CD4-positive, alpha-beta memory T cell (primary cell): ENCODE measurements at regions of chr10 and their contacts with region 1.

Region 1: GRCh38 chr10:5813287-5814109 is at the start of gene GDI2:
- DNase-seq: peak; percentile 96 to 98 (median 97)
- H3K4me3 ChIP-seq: peak within 1 kb of the TSS; percentile 78 to 95
- H3K4me3 Mint-ChIP-seq: peak within 1 kb of the TSS; percentile 87 to 99 (median 95)
- H3K27ac ChIP-seq: peak within 1 kb of the TSS; percentile 98
- H3K27ac Mint-ChIP-seq: peak within 1 kb of the TSS; percentile 88 to 98 (median 97)
- H3K4me1 ChIP-seq: peaks cover 51% of the 10 kb centered on the region
- H3K4me1 Mint-ChIP-seq: peaks cover 40 to 65% (median 53%) of the 10 kb centered on the region in 4 donors
- H3K27me3 ChIP-seq: no peaks in the 10 kb centered on the region
- H3K27me3 Mint-ChIP-seq: no peaks in the 10 kb centered on the region
- total RNA-seq, gene GDI2: 137 to 140 TPM

Region 2: GRCh38 chr10:5446390-5446926 is 367.0 kb before region 1 on chr10:
- CTCF ChIA-PET with region 1: no interaction called
- POLR2A ChIA-PET with region 1: no interaction called
- intact Hi-C with region 1: loop called (anchors 5 kb)
- DNase-seq: peak; percentile 46 to 72 (median 56)
- H3K4me3 ChIP-seq: peak overlapping the region in 1 of 2 donors; percentile 10
- H3K4me3 Mint-ChIP-seq: peak overlapping the region; percentile 81 to 90 (median 86)
- H3K27ac ChIP-seq: no peak overlapping the region
- H3K27ac Mint-ChIP-seq: peak overlapping the region; percentile 45 to 93 (median 85)
- H3K4me1 ChIP-seq: peaks cover 23% of the 10 kb centered on the region
- H3K4me1 Mint-ChIP-seq: peaks cover 13 to 40% (median 27%) of the 10 kb centered on the region in 4 donors
- H3K27me3 ChIP-seq: no peaks in the 10 kb centered on the region
- H3K27me3 Mint-ChIP-seq: no peaks in the 10 kb centered on the region

Region 3: GRCh38 chr10:5623081-5623748 is 190.3 kb before region 1 on chr10:
- CTCF ChIA-PET with region 1: no interaction called
- POLR2A ChIA-PET with region 1: no interaction called
- intact Hi-C with region 1: no loop called
- DNase-seq: peak; percentile 68 to 75 (median 70)
- H3K4me3 ChIP-seq: no peak overlapping the region
- H3K4me3 Mint-ChIP-seq: no peak overlapping the region
- H3K27ac ChIP-seq: no peak overlapping the region
- H3K27ac Mint-ChIP-seq: no peak overlapping the region
- H3K4me1 ChIP-seq: no peaks in the 10 kb centered on the region
- H3K4me1 Mint-ChIP-seq: peaks cover 0 to 7% (median 3%) of the 10 kb centered on the region in 4 donors
- H3K27me3 ChIP-seq: no peaks in the 10 kb centered on the region
- H3K27me3 Mint-ChIP-seq: no peaks in the 10 kb centered on the region

Region 4: GRCh38 chr10:5776136-5776880 is 37.2 kb before region 1 on chr10:
- CTCF ChIA-PET with region 1: no interaction called
- POLR2A ChIA-PET with region 1: interaction called, 24 read pairs
- intact Hi-C with region 1: loop called (anchors 2 kb)
- DNase-seq: no peak
- H3K4me3 ChIP-seq: peak overlapping the region in 1 of 2 donors; percentile 23
- H3K4me3 Mint-ChIP-seq: peak overlapping the region; percentile 56 to 81 (median 76)
- H3K27ac ChIP-seq: peak overlapping the region; percentile 58
- H3K27ac Mint-ChIP-seq: peak overlapping the region; percentile 88 to 97 (median 94)
- H3K4me1 ChIP-seq: peaks cover 26% of the 10 kb centered on the region
- H3K4me1 Mint-ChIP-seq: peaks cover 35 to 65% (median 46%) of the 10 kb centered on the region in 4 donors
- H3K27me3 ChIP-seq: no peaks in the 10 kb centered on the region
- H3K27me3 Mint-ChIP-seq: no peaks in the 10 kb centered on the region

Region 5: GRCh38 chr10:5840314-5841307 is 27.1 kb after region 1 on chr10:
- CTCF ChIA-PET with region 1: no interaction called
- POLR2A ChIA-PET with region 1: no interaction called
- intact Hi-C with region 1: no loop called
- DNase-seq: no peak
- H3K4me3 ChIP-seq: no peak overlapping the region
- H3K4me3 Mint-ChIP-seq: no peak overlapping the region
- H3K27ac ChIP-seq: no peak overlapping the region
- H3K27ac Mint-ChIP-seq: no peak overlapping the region
- H3K4me1 ChIP-seq: no peaks in the 10 kb centered on the region
- H3K4me1 Mint-ChIP-seq: peaks cover 2 to 16% (median 4%) of the 10 kb centered on the region in 4 donors
- H3K27me3 ChIP-seq: no peaks in the 10 kb centered on the region
- H3K27me3 Mint-ChIP-seq: peaks cover 2 to 3% of the 10 kb centered on the region in 2 donors

Region 6: GRCh38 chr10:5873515-5873995 is 60.1 kb after region 1 on chr10:
- CTCF ChIA-PET with region 1: interaction called, 4 read pairs
- POLR2A ChIA-PET with region 1: no interaction called
- intact Hi-C with region 1: loop called (anchors 1 kb)
- DNase-seq: peak; percentile 57 to 75 (median 63)
- H3K4me3 ChIP-seq: no peak overlapping the region
- H3K4me3 Mint-ChIP-seq: peak overlapping the region in 2 of 8 donors; percentile 26 to 60
- H3K27ac ChIP-seq: no peak overlapping the region
- H3K27ac Mint-ChIP-seq: peak overlapping the region in 3 of 7 donors; percentile 18 to 63 (median 33)
- H3K4me1 ChIP-seq: no peaks in the 10 kb centered on the region
- H3K4me1 Mint-ChIP-seq: peaks cover 3 to 6% (median 4%) of the 10 kb centered on the region in 4 donors
- H3K27me3 ChIP-seq: no peaks in the 10 kb centered on the region
- H3K27me3 Mint-ChIP-seq: no peaks in the 10 kb centered on the region

Region 7: DNA sequence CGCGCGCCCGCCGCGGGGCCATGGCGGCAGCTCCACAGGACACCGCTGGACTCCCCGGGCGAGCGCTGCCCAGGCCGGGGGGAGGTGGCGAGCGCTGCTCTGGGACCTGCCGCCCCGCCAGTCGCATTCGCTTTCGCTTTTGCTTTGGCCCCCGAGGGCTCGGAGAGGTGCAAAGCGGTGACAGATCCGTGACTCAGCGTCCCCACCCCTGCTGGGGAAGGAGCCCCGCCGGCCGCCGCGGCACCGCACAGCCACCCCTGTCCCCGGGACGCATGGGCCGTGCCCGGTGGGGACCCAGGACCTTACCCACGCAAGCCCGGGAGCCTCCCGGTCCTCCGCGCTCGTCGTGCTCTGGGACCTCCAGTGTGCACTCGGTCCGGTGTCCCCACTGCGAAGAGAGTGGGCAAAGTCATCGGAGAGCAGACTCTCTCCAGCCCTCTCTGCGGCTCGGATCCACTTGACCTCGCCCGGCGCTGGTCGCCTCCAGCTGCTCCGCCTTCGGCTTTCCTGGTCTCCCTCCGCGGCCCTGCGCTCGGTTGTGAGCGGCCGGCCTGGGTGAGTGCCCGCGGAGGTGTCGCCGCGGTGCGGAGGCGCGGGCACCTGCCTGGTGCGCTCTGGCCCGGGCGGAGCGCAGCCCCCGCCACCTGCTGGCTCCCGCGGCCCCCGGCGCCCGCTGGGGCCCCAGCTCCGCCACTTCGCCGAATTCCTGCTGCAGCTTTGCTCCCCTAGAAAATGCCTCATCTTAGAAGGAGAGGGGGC is 164.2 kb after region 1 on chr10 and contains the start of gene IL15RA:
- CTCF ChIA-PET with region 1: no interaction called
- POLR2A ChIA-PET with region 1: interaction called, 3 read pairs
- intact Hi-C with region 1: loop called (anchors 5 kb)
- DNase-seq: peak; percentile 76 to 92 (median 81)
- H3K4me3 ChIP-seq: peak within 1 kb of the TSS; percentile 79 to 96
- H3K4me3 Mint-ChIP-seq: peak within 1 kb of the TSS; percentile 95 to 99 (median 98)
- H3K27ac ChIP-seq: peak within 1 kb of the TSS; percentile 84
- H3K27ac Mint-ChIP-seq: peak within 1 kb of the TSS; percentile 93 to 98 (median 96)
- H3K4me1 ChIP-seq: peaks cover 23% of the 10 kb centered on the region
- H3K4me1 Mint-ChIP-seq: peaks cover 17 to 42% (median 29%) of the 10 kb centered on the region in 4 donors
- H3K27me3 ChIP-seq: no peaks in the 10 kb centered on the region
- H3K27me3 Mint-ChIP-seq: no peaks in the 10 kb centered on the region
- total RNA-seq, gene IL15RA: 11.1 to 14.7 TPM

Region 8: DNA sequence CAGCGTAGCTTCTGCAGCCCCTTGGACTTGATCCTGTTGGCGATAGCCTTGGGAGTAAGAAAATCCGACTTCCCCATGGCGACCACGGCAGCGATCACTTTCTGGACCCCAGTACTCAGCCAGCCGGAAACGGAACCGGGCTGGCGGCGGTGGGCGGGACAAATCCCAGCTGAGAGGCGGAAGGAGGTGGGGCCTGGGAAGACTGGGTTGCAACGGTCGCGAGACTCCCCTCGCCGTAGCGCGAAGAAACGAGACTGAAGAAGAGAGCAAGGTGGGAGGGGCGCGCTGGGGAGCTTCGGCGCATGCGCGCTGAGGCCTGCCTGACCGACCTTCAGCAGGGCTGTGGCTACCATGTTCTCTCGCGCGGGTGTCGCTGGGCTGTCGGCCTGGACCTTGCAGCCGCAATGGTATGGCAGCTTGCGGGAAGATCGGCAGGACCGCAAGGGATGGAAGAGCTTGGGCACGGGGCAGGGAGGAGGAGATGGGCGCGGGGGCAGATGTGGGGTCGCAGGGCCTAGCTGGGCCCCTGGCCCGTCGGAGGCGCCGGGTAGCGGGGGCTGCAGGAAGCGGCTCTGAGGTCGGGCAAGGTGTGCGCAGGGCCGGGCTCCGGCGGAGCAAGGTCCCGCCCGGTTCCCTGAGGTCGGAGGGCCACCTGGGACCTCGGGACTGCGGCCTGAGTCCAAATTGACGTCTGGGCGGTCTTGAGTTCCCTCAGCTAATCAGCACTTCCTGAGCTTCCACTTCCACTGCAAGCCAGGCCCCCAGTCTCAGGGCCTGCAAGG is 1974.5 kb after region 1 on chr10 and contains the starts of genes ATP5F1C and KIN:
- CTCF ChIA-PET with region 1: no interaction called
- POLR2A ChIA-PET with region 1: no interaction called
- intact Hi-C with region 1: loop called (anchors 2 kb)
- DNase-seq: peak; percentile 96 to 97 (median 97)
- H3K4me3 ChIP-seq: peak within 1 kb of the TSS; percentile 91 to 99
- H3K4me3 Mint-ChIP-seq: no peak within 1 kb of the TSS
- H3K27ac ChIP-seq: peak within 1 kb of the TSS; percentile 75
- H3K27ac Mint-ChIP-seq: peak within 1 kb of the TSS in 1 of 7 donors; percentile 36
- H3K4me1 ChIP-seq: peaks cover 77% of the 10 kb centered on the region
- H3K4me1 Mint-ChIP-seq: peaks cover 45 to 72% (median 56%) of the 10 kb centered on the region in 4 donors
- H3K27me3 ChIP-seq: no peaks in the 10 kb centered on the region
- H3K27me3 Mint-ChIP-seq: no peaks in the 10 kb centered on the region
- total RNA-seq, gene ATP5F1C: 124 to 135 TPM
- total RNA-seq, gene KIN: 14.5 to 14.7 TPM